Kidney (tissue), 22 donors: ENCODE measurements at regions of chr4 and their contacts with region 1.

Region 1: DNA sequence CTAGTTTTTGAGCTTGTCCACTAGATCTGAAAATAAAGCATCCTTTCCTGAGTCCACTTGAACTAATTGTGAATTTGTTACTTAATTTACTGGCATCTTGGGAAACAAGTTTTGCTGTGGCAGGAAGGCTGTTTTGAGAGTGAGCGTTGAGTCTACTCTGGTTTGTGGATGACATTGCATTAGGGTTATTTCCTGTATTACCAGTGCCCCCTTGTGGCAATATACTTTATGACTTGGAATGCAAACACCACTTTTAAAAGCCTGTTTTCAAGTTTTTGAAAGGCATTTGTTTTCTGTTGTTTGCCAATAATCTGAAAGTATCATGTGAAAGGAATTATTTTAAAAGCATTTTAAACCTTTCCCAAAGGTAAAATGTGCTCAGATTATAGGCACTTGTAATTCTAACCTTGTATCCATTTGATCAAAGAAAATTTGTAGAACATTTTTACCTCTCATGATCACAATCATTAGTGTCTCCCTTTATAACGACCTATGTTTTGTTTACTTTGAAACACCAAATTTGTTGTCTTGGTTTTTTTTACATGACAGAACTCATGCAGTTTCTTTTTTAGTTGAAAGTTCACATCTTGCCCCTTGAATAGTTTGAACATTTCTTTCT is 18.0 kb upstream of the CYP2U1 start:
- DNase-seq: peak in 3 of 5 donors; percentile 30 to 84 (median 72)
- H3K4me3 ChIP-seq: no peak overlapping the region
- H3K27ac ChIP-seq: no peak overlapping the region
- H3K4me1 ChIP-seq: no peaks in the 10 kb centered on the region
- H3K27me3 ChIP-seq: no peaks in the 10 kb centered on the region
- CTCF ChIP-seq: peak; percentile 71

Region 2: GRCh38 chr4:107757864-107758476 is 155.4 kb before region 1 on chr4:
- intact Hi-C with region 1: loop called (anchors 5 kb)
- DNase-seq: peak in 1 of 5 donors; percentile 30
- H3K4me3 ChIP-seq: no peak overlapping the region
- H3K27ac ChIP-seq: no peak overlapping the region
- H3K4me1 ChIP-seq: peaks cover 0 to 4% (median 0%) of the 10 kb centered on the region in 3 donors
- H3K27me3 ChIP-seq: no peaks in the 10 kb centered on the region
- CTCF ChIP-seq: peak; percentile 35

Region 3: GRCh38 chr4:108008721-108009120 is 95.3 kb after region 1 on chr4:
- intact Hi-C with region 1: no loop called
- DNase-seq: no peak
- H3K4me3 ChIP-seq: no peak overlapping the region
- H3K27ac ChIP-seq: no peak overlapping the region
- H3K4me1 ChIP-seq: peaks cover 0 to 4% (median 3%) of the 10 kb centered on the region in 3 donors
- H3K27me3 ChIP-seq: no peaks in the 10 kb centered on the region
- CTCF ChIP-seq: no peak